ENCODE measurements at regions of chr6 and their contacts with region 1.

Region 1: DNA sequence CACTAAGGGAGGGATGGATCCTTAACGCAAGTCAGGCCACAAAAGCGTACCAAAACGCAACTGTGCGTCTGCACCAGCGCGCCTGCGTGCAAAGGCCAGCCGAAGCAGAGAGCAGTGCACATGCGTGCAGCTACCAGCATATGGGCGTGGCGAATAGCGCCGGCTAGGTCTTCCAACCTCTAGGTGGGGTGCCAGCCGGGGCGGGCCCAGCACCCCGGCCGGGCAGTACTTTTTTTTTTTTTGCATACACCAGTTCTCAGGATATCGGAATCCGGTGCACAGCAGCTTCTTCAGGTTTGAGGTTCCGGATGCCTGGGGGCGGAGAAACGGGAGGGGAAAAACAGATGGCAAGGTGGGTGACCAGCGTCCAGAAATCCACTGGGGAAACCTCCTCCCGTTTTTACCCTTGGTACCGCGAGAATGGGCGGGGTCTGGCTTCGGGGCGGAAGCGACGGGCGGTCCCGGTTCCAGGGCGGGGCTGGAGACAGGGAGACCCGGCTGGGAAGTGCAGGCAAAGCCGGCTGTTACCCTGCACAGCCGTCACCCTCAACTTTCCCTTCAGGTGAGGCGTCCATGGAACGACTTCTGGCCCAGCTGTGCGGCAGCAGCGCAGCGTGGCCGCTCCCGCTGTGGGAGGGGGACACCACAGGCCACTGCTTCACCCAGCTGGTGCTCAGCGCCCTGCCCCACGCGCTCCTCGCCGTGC is at the start of gene ABCC10:
- DNase-seq: peak; percentile 89
- H3K4me3 ChIP-seq: peak within 1 kb of the TSS; percentile 99
- H3K27ac ChIP-seq: peak within 1 kb of the TSS; percentile 90
- H3K27me3 ChIP-seq: no peaks in the 10 kb centered on the region
- CTCF ChIP-seq: peak; percentile 56
- polyA plus RNA-seq, gene ABCC10: 10.6 and 12.0 TPM in 2 replicates

Region 2: DNA sequence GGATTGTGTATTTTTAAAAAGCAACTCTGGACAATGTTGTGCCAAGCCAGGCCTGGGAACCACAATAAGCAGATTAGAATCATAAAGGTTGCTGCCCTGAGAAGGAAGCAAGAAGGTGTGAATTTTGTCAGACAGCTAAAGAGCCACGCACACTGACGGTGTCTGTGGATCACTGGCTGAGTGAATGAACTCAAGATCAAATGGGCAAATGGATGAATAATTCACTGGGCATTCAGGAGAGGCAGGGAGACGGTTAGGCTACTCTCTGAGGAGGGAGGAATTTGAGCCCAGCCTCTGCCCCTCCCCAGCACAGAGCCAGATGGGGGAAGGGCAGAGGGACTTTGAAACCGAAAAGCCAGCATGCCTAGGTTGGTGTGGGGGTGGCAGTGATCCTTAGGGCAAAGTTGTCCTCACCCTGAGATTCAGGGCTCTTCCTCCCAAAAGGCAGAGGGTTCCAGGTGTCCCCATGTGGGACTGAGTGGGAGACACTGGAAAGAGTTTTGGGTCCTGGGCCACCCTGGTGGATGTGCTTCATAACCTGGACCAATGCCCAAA is 149.0 kb before region 1 on chr6:
- CTCF ChIA-PET with region 1: no interaction called
- POLR2A ChIA-PET with region 1: no interaction called
- DNase-seq: no peak
- H3K4me3 ChIP-seq: no peak overlapping the region
- H3K27ac ChIP-seq: no peak overlapping the region
- H3K27me3 ChIP-seq: peaks cover 38% of the 10 kb centered on the region
- CTCF ChIP-seq: no peak

Region 3: GRCh38 chr6:43369174-43370022 is 58.2 kb before region 1 on chr6 and contains the start of gene ZNF318:
- CTCF ChIA-PET with region 1: no interaction called
- POLR2A ChIA-PET with region 1: interaction called, 10 read pairs
- DNase-seq: peak; percentile 93
- H3K4me3 ChIP-seq: peak within 1 kb of the TSS; percentile 75
- H3K27ac ChIP-seq: peak within 1 kb of the TSS; percentile 65
- H3K27me3 ChIP-seq: no peaks in the 10 kb centered on the region
- CTCF ChIP-seq: no peak
- polyA plus RNA-seq, gene ZNF318: 12.5 and 14.9 TPM in 2 replicates